ENCODE measurements at regions of chr10 and their contacts with region 1.

Region 1: GRCh38 chr10:117442944-117443685 is 67.9 kb upstream of the PDZD8 start:
- DNase-seq: peak; percentile 91
- ATAC-seq: peak; percentile 96
- H3K4me3 Mint-ChIP-seq: no peak overlapping the region
- H3K27ac Mint-ChIP-seq: no peak overlapping the region
- H3K4me1 Mint-ChIP-seq: no peaks in the 10 kb centered on the region; the same call in 1 of the 2 replicates
- H3K27me3 Mint-ChIP-seq: peaks cover 30% of the 10 kb centered on the region
- CTCF ChIP-seq: peak; percentile 98

Region 2: GRCh38 chr10:117226824-117227451 is 216.2 kb before region 1 on chr10:
- CTCF ChIA-PET with region 1: interaction called, 21 read pairs
- POLR2A ChIA-PET with region 1: no interaction called
- DNase-seq: peak; percentile 68
- ATAC-seq: peak; percentile 97
- H3K4me3 Mint-ChIP-seq: no peak overlapping the region
- H3K27ac Mint-ChIP-seq: no peak overlapping the region
- H3K4me1 Mint-ChIP-seq: peaks cover 14% of the 10 kb centered on the region
- H3K27me3 Mint-ChIP-seq: peaks cover 8% of the 10 kb centered on the region; the same call in 1 of the 2 replicates
- CTCF ChIP-seq: no peak

Region 3: GRCh38 chr10:117405730-117406129 is 37.4 kb before region 1 on chr10:
- CTCF ChIA-PET with region 1: interaction called, 18 read pairs
- POLR2A ChIA-PET with region 1: no interaction called
- DNase-seq: no peak
- ATAC-seq: no peak
- H3K4me3 Mint-ChIP-seq: no peak overlapping the region
- H3K27ac Mint-ChIP-seq: no peak overlapping the region
- H3K4me1 Mint-ChIP-seq: peaks cover 18% of the 10 kb centered on the region
- H3K27me3 Mint-ChIP-seq: no peaks in the 10 kb centered on the region
- CTCF ChIP-seq: no peak

Region 4: DNA sequence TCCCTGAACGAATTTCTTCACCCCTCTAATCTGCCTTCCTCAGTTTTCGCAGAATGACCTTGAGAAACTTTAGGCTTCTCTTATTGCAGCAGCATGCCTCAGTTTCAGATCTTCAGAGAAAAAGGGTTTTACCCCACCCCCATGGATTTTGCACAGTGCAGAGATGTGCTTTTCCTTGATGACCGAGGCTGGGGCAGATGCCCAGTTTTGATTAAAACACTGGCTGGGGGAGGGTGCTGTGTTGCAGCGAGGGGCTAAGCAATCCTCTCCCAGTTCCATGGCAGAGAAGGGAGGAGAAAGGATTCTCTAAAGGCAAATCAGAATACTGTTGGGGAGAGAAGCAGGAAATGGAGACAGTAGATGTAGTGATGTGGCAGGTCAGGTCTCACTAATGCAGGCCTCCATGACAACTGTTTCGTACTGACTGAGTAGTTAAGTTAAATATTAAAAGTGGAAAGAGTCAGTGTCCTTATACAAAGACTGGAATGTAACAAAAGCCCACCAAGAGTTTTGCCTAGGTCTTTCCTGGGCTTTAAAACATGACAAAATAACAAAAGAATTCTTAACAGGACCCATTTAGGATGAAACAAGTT is 17.0 kb before region 1 on chr10:
- CTCF ChIA-PET with region 1: interaction called, 96 read pairs
- POLR2A ChIA-PET with region 1: interaction called, 7 read pairs
- DNase-seq: no peak
- ATAC-seq: peak; percentile 11; the same call in 1 of the 2 replicates
- H3K4me3 Mint-ChIP-seq: no peak overlapping the region
- H3K27ac Mint-ChIP-seq: peak overlapping the region; percentile 71
- H3K4me1 Mint-ChIP-seq: peaks cover 39% of the 10 kb centered on the region
- H3K27me3 Mint-ChIP-seq: peaks cover 14% of the 10 kb centered on the region
- CTCF ChIP-seq: no peak

Region 5: DNA sequence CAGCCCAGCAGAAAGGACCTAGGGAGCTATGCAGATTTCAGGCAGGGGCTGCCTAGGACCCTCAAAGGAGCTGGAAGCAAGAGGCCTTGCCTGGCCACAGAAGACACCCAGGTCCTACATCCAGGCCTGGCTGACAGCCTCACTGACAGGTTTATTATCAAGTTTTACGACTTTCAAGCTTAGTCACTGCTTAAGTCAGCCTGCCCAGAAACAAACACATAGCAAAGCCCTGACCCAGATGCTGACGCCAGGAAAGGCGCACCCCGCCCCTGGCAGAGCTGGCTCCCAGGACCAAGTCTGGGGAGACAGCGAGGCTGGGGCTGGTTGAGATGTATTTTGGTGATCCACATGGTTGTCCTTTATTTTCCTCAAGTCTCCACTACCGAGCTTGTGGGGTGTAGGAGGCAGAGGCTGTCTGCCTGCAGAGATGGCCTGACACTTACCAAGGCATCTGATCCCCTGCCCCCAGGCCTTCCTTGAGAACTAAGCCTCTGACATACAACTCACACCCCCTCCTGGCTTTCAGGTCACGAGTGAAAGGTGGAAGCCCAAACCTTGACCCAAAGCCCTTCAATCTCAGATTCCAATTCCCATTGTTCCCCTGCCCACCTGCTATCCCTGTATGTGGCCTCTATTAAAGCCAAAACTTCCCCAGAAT is 18.8 kb after region 1 on chr10:
- CTCF ChIA-PET with region 1: interaction called, 40 read pairs
- POLR2A ChIA-PET with region 1: no interaction called
- DNase-seq: no peak
- ATAC-seq: no peak; the same call in none of the 2 replicates
- H3K4me3 Mint-ChIP-seq: no peak overlapping the region
- H3K27ac Mint-ChIP-seq: no peak overlapping the region
- H3K4me1 Mint-ChIP-seq: peaks cover 34% of the 10 kb centered on the region
- H3K27me3 Mint-ChIP-seq: no peaks in the 10 kb centered on the region
- CTCF ChIP-seq: no peak

Region 6: DNA sequence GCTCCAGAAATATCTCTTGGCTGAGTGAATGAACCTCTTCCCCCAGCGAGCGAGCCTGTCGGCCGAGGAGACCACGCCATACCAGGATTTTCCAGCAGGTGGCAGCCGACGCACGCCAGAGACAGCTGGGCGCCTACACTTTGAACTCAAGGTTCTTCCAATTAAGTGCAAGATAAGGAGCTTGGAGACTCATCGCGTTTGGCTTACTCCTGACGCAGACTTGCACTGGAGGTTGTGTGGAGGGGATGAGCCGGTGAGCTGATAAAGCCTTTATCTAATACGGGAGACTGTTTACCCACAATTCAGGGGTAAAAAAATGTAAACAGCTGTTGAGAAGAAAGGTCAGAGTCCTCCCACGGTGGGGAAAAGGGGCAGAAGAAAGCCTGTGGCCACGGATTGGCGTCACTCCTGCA is 53.5 kb after region 1 on chr10:
- CTCF ChIA-PET with region 1: interaction called, 29 read pairs
- POLR2A ChIA-PET with region 1: no interaction called
- DNase-seq: peak; percentile 82
- ATAC-seq: peak; percentile 88
- H3K4me3 Mint-ChIP-seq: no peak overlapping the region
- H3K27ac Mint-ChIP-seq: no peak overlapping the region
- H3K4me1 Mint-ChIP-seq: peaks cover 2% of the 10 kb centered on the region; the same call in 1 of the 2 replicates
- H3K27me3 Mint-ChIP-seq: peaks cover 35% of the 10 kb centered on the region
- CTCF ChIP-seq: peak; percentile 88